CD8-positive, alpha-beta T cell (primary cell): ENCODE measurements at regions of chr11 and their contacts with region 1.

Region 1: DNA sequence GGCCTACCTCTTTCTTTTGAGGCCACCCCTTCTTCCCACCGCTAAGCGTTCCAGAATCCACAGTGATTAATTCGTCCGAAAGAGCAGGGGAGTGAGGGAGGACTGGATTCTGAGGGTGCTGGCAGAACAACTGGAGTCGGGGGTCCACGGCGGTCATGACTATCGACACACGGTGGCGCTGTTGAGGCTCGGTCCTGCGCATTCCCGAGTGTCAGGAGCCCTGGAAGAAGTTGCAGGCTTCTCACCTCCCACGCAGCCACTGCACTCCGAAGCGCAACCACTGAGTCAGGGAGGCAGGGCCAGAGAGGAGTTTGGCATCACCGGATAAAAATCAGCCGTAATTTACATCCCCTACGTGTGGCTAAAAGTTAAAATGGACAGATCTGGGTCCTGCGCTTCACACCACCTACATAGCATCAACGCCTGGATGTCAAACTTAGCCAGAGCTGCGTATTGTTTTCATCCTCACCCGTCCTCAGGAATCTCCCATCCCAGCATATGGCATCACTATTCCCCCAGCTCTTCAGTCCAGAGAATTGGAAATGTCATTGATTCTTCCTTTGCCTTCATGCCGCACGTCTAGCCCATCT is 10.7 kb upstream of the CTSF start:
- DNase-seq: peak; percentile 43 to 86 (median 80)
- ATAC-seq: peak; percentile 90
- H3K4me3 ChIP-seq: no peak overlapping the region
- H3K4me3 Mint-ChIP-seq: no peak overlapping the region
- H3K27ac ChIP-seq: no peak overlapping the region
- H3K27ac Mint-ChIP-seq: no peak overlapping the region
- H3K4me1 ChIP-seq: no peaks in the 10 kb centered on the region
- H3K4me1 Mint-ChIP-seq: peaks cover 6% of the 10 kb centered on the region
- H3K27me3 ChIP-seq: no peaks in the 10 kb centered on the region
- H3K27me3 Mint-ChIP-seq: peaks cover 2% of the 10 kb centered on the region
- CTCF ChIP-seq: peak; percentile 86

Region 2: DNA sequence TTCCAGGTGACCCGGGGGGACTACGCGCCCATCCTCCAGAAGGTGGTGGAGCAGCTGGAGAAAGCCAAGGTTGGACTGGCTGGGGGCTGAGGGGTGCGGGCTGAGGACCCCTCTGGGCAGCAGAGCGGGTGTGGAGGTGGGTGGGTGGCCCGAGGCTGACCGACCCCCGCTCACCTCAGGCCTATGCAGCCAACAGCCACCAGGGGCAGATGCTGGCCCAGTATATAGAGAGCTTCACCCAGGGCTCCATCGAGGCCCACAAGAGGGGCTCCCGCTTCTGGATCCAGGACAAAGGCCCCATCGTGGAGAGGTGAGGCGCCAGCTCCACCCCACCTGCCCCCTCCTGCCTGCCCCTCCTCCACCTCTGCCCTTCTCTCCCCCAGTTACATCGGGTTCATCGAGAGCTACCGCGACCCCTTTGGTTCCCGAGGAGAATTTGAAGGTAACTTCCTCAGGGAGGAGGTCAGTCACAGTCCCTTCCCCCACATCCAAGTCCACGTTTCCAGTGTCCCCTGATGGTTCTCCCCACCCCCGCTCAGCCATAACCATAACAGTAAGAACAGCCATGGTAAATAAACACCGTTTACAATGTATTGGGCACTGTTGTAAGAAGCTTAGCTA is 87.7 kb before region 1 on chr11:
- CTCF ChIA-PET with region 1: no interaction called
- POLR2A ChIA-PET with region 1: no interaction called
- intact Hi-C with region 1: no loop called
- DNase-seq: no peak
- ATAC-seq: no peak
- H3K4me3 ChIP-seq: no peak overlapping the region
- H3K4me3 Mint-ChIP-seq: no peak overlapping the region
- H3K27ac ChIP-seq: no peak overlapping the region
- H3K27ac Mint-ChIP-seq: no peak overlapping the region
- H3K4me1 ChIP-seq: no peaks in the 10 kb centered on the region
- H3K4me1 Mint-ChIP-seq: no peaks in the 10 kb centered on the region
- H3K27me3 ChIP-seq: no peaks in the 10 kb centered on the region
- H3K27me3 Mint-ChIP-seq: no peaks in the 10 kb centered on the region
- CTCF ChIP-seq: no peak

Region 3: DNA sequence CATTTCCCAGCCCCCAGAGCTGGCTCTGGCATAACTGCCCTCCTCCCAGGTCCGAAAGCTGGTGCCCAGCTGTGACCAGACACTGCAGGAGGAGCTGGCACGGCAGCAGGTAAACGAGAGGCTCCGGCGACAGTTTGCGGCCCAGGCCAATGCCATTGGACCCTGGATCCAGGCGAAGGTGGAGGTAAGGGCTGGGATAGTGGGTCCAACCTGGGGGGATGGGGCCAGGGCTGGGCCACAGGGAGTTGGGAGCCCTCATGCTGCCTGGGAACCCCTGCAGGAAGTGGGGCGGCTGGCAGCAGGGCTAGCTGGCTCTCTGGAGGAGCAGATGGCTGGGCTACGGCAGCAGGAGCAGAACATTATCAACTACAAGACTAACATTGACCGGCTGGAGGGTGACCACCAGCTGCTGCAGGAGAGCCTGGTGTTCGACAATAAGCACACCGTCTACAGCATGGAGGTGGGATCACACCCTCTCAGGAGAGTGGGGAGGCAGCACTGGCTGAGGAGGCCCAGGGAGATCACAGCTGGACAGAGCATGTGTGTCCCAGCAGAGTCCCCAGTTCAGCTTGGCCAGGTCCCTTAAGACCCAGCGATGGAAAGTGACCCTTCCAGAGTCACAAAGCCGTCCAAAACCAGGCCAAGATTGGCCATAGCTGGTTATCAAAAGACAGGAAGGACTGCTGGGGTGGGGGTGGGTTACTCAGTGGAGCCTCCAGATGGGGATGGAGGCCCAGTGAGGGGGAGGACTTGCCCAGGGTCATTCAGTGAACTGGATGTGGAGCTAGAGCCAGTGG is 17.7 kb before region 1 on chr11:
- CTCF ChIA-PET with region 1: interaction called, 19 read pairs
- POLR2A ChIA-PET with region 1: no interaction called
- intact Hi-C with region 1: no loop called
- DNase-seq: no peak
- ATAC-seq: no peak
- H3K4me3 ChIP-seq: no peak overlapping the region
- H3K4me3 Mint-ChIP-seq: no peak overlapping the region
- H3K27ac ChIP-seq: no peak overlapping the region
- H3K27ac Mint-ChIP-seq: no peak overlapping the region
- H3K4me1 ChIP-seq: peaks cover 7% of the 10 kb centered on the region
- H3K4me1 Mint-ChIP-seq: peaks cover 8% of the 10 kb centered on the region
- H3K27me3 ChIP-seq: peaks cover 0 to 6% of the 10 kb centered on the region in 2 experiments
- H3K27me3 Mint-ChIP-seq: peaks cover 7% of the 10 kb centered on the region
- CTCF ChIP-seq: no peak

Region 4: GRCh38 chr11:66568124-66568916 is 10.8 kb before region 1 on chr11 and contains the start of gene CTSF:
- CTCF ChIA-PET with region 1: interaction called, 26 read pairs
- POLR2A ChIA-PET with region 1: interaction called, 3 read pairs
- intact Hi-C with region 1: no loop called
- DNase-seq: peak; percentile 35 to 85 (median 74)
- ATAC-seq: peak; percentile 95
- H3K4me3 ChIP-seq: peak within 1 kb of the TSS; percentile 46 to 74
- H3K4me3 Mint-ChIP-seq: peak within 1 kb of the TSS; percentile 82
- H3K27ac ChIP-seq: peak within 1 kb of the TSS in 1 of 2 experiments; percentile 17
- H3K27ac Mint-ChIP-seq: peak within 1 kb of the TSS; percentile 81
- H3K4me1 ChIP-seq: peaks cover 12% of the 10 kb centered on the region
- H3K4me1 Mint-ChIP-seq: peaks cover 10% of the 10 kb centered on the region
- H3K27me3 ChIP-seq: peaks cover 0 to 3% of the 10 kb centered on the region in 2 experiments
- H3K27me3 Mint-ChIP-seq: no peaks in the 10 kb centered on the region
- CTCF ChIP-seq: no peak
- total RNA-seq, gene CTSF: 13.1 to 14.1 TPM

Region 5: DNA sequence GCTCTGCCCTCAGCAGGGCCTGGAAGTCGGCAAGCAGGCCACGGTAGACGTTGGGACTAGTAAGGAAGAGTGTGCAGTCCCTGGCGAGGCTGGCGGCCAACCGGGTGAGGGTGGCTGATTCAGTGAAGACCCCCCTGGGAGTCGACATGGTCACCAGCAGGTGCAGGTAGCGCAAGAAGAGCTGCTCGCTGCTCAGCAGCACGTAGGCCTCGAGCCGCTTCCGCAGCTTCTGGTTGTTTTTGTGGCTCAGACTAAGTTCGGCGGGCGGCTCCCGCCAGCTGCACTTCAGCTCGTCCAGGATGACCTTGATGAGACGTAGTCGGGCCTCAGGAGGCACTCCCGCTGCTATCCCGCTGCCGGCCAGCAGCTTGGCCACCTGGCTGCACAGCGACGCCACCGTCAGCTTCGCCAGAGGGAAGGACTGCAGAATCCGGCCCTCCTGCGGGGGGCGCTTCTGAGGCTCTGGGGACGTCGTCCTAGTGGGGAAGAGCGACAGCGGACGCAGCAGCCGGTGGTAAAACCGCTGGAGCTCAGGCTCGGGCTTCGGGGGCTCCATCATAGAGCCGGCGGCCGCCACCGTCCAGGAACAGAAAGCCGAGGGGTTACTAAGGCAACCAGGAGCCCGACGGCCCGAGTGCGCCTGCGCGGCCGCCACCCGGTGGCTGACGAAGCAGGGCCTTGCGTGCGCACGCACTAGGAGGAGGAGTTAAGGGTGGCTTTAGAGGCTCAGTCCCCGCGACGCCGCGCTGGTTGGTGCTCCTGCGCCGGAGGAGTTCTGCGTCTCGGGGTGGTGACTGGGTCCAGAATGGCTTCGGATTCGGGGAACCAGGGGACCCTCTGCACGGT is 13.6 kb after region 1 on chr11 and contains the starts of genes CCDC87 and CCS:
- CTCF ChIA-PET with region 1: interaction called, 29 read pairs
- POLR2A ChIA-PET with region 1: interaction called, 3 read pairs
- intact Hi-C with region 1: no loop called
- DNase-seq: peak; percentile 98 to 100 (median 99)
- ATAC-seq: peak; percentile 97
- H3K4me3 ChIP-seq: peak within 1 kb of the TSS; percentile 68 to 97
- H3K4me3 Mint-ChIP-seq: peak within 1 kb of the TSS; percentile 100
- H3K27ac ChIP-seq: peak within 1 kb of the TSS; percentile 84 to 86
- H3K27ac Mint-ChIP-seq: peak within 1 kb of the TSS; percentile 99
- H3K4me1 ChIP-seq: peaks cover 33% of the 10 kb centered on the region
- H3K4me1 Mint-ChIP-seq: peaks cover 39% of the 10 kb centered on the region
- H3K27me3 ChIP-seq: no peaks in the 10 kb centered on the region
- H3K27me3 Mint-ChIP-seq: no peaks in the 10 kb centered on the region
- CTCF ChIP-seq: peak; percentile 55
- total RNA-seq, gene CCDC87: 0.53 to 0.65 TPM
- total RNA-seq, gene CCS: 30.0 to 32.3 TPM

Region 6: DNA sequence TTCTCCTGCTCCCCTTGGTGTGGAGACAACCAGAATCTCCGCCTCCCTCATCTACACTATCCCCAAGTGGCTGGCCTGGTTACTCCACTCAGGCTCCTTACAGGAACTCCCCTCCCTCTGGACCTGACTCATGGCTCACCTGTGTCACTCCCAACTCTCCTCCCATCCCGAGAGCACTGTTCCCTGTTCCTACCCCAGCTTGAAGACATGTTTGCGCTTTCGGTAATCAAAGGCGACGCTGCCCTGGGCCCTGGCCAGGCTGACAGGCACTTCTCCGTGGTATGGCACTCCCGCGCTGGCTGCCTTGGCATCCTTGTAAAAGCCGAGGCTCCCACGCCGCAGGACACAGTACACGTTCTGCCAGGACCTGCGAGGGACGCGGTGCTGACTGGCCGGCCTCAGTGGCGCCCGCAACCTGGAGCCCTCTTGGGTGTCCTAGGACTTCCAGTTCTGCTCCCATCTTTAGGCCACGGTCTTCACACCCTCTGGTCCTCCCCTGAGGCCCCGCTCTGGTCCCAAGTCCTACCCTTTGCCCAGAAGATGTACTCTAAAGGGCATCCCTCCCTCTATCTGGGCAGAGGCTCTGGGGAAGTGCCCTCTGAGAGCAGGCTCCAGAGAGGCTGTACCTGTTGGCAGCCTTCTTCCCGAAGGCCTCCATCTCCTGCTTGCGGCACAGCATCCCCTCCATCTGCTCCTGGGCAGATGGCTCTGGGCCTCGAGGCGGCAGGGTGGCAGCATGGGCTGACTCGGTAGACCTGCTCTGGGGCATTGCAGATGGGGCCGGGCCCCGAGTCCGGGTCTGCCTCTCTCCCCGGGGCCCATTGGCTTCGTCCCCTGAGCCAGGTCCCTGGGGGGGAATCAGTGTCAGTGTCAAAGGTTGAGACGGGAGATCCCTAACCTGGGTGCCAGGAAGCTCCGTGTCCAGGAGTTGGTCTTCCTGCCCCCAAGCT is 108.0 kb after region 1 on chr11:
- CTCF ChIA-PET with region 1: interaction called, 280 read pairs
- POLR2A ChIA-PET with region 1: no interaction called
- intact Hi-C with region 1: no loop called
- DNase-seq: no peak
- ATAC-seq: no peak
- H3K4me3 ChIP-seq: no peak overlapping the region
- H3K4me3 Mint-ChIP-seq: no peak overlapping the region
- H3K27ac ChIP-seq: no peak overlapping the region
- H3K27ac Mint-ChIP-seq: no peak overlapping the region
- H3K4me1 ChIP-seq: no peaks in the 10 kb centered on the region
- H3K4me1 Mint-ChIP-seq: no peaks in the 10 kb centered on the region
- H3K27me3 ChIP-seq: no peaks in the 10 kb centered on the region
- H3K27me3 Mint-ChIP-seq: no peaks in the 10 kb centered on the region
- CTCF ChIP-seq: no peak

Region 7: DNA sequence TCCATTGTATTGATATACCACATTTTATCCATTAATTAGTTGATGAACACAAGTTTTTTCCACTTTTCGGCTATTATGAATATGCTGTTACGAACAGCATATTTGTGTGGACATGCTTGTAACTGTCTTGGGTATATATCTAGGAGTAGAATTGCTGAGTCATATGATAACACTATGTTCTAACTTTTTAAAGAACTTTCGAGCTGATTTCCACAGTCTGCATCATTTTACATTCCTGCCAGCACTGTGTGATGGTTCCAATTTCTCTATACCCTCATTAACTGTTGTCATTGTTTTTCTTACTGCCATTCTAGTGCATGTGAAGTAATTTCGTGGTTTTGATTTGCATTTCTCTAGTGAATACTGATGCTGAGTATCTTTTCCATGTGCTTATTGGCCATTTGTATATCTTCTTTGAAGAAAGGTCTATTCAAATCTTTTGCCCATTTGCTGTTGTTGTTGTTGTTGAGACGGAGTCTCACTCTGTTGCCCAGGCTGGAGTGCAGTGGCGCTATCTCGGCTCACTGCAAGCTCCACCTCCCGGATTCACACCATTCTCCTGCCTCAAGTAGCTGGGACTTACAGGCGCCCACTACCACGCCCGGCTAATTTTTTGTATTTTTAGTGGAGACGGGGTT is 256.8 kb after region 1 on chr11:
- CTCF ChIA-PET with region 1: interaction called, 4 read pairs
- POLR2A ChIA-PET with region 1: no interaction called
- intact Hi-C with region 1: loop called in 1 of 2 experiments (anchors 2 kb)
- DNase-seq: no peak
- ATAC-seq: no peak
- H3K4me3 ChIP-seq: no peak overlapping the region
- H3K4me3 Mint-ChIP-seq: no peak overlapping the region
- H3K27ac ChIP-seq: no peak overlapping the region
- H3K27ac Mint-ChIP-seq: no peak overlapping the region
- H3K4me1 ChIP-seq: peaks cover 17% of the 10 kb centered on the region
- H3K4me1 Mint-ChIP-seq: peaks cover 33% of the 10 kb centered on the region
- H3K27me3 ChIP-seq: no peaks in the 10 kb centered on the region
- H3K27me3 Mint-ChIP-seq: no peaks in the 10 kb centered on the region
- CTCF ChIP-seq: no peak